ENCODE measurements at regions of chrX and their contacts with region 1.

Region 1: GRCh38 chrX:19017271-19017670 is 33.4 kb upstream of the PHKA2 start:
- DNase-seq: peak; percentile 63
- ATAC-seq: peak; percentile 87
- H3K4me3 ChIP-seq: no peak overlapping the region
- H3K27ac ChIP-seq: no peak overlapping the region
- H3K4me1 ChIP-seq: peaks cover 13% of the 10 kb centered on the region
- H3K27me3 ChIP-seq: no peaks in the 10 kb centered on the region
- CTCF ChIP-seq: peak; percentile 85

Region 2: DNA sequence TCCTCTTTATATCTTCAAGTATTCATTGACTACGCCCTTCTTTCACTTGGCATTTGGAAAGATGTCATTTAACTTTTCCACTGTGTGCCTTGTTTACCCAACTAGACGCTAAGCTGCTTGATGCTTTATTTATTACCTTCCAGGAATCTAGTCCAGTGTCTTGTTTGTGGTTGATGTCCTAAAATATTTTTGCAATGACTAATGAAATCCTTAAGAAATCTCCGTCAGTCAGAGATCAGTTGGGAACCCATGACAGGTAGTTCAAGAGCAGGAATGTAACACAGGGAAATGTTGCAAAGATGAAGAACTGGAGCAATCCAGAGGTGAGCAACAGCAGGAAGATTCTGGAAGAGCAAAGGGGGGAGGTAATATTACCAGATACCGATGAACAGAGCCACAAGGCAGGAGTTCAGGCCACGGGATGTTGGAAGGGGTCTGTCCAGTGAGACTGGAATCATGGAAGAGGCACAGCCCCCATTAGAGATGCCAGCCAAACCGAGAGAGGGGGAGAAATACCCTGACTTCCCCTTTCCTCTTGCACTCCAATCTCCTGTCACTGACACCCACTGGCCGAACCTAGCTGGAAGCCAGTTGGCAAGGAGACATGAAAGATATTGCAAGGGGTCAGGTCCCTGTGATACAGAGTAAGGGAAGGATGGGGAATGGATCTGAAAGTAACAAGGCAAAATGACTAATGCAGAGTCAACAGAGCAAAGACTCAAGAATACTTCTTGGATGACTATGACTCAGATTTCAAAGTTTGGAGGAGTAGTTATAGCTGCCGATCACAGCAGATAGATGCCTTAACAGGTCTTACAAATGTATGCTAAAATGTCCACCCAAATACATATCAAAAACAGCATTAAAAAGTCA is 29.3 kb after region 1 on chrX:
- CTCF ChIA-PET with region 1: no interaction called
- POLR2A ChIA-PET with region 1: no interaction called
- intact Hi-C with region 1: loop called (anchors 2 kb)
- DNase-seq: peak; percentile 89
- ATAC-seq: peak; percentile 93
- H3K4me3 ChIP-seq: peak overlapping the region; percentile 45; the same call in 1 of the 2 replicates
- H3K27ac ChIP-seq: peak overlapping the region; percentile 96
- H3K4me1 ChIP-seq: peaks cover 29% of the 10 kb centered on the region
- H3K27me3 ChIP-seq: no peaks in the 10 kb centered on the region
- CTCF ChIP-seq: no peak

Region 3: DNA sequence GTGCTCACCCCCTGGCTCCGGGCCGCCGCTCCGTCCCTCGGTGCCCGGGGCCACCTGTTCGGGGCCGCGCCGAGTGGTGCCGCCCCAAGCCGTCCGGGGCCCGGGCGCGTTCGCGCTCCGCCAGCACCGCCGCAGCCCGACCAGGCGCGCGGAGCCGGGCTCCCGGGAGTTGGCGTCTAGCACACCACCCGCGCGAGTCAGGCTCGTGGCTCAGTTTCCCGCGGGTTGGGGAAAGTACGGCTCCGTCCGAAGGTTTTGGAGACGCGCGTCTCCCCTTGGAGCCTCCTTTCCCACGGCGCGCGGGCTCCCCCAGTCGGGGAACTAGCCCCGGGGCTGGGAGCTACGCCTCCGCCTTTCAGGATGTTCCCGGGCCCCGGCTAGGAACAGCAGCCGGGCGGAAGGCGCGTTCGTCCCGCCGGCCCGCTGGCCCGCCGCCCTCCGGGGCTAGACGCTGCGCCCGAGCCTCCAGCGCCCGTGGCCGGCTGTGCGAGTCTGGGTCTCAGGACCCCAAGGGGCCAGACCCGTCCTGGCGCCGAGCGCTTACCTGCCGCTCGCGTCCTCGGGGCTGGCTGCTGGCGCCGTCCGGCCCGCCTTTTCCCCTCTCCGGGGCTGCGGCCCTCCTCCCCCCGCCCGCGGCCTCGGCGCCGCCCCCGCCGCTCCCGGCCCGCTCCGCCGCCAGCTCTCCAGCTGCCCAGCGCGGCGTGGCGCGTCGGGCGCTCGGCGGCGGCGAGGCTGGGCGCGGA is 104.8 kb after region 1 on chrX and contains the start of gene ADGRG2:
- CTCF ChIA-PET with region 1: no interaction called
- POLR2A ChIA-PET with region 1: no interaction called
- intact Hi-C with region 1: loop called (anchors 5 kb)
- DNase-seq: peak; percentile 48
- ATAC-seq: peak; percentile 86
- H3K4me3 ChIP-seq: peak within 1 kb of the TSS; percentile 67
- H3K27ac ChIP-seq: no peak within 1 kb of the TSS
- H3K4me1 ChIP-seq: no peaks in the 10 kb centered on the region
- H3K27me3 ChIP-seq: peaks cover 20% of the 10 kb centered on the region
- CTCF ChIP-seq: 0 out of 2 replicates have a peak, but pooled peaks have one; percentile 25
- total RNA-seq, gene ADGRG2: 1.1 and 1.4 TPM in 2 replicates

Region 4: DNA sequence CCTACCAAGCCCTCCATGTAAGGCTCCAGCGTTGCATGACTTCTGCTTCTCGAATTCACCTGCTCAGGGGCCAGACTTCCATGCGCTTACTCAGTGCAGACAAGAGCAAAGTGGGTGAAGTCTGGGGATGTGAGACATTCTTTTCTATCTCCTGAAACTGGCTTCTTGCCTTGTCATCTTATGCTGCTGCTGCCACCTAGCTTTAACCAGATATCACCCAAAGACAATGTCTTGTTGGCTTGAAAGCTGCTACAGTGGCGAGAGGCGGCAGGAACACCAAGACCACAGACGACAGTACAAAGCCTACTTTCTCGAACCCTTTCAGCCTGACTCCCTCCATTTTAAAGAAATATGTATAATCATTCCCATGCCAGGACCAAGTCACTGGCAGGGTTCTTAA is 208.7 kb after region 1 on chrX:
- CTCF ChIA-PET with region 1: no interaction called
- POLR2A ChIA-PET with region 1: no interaction called
- intact Hi-C with region 1: loop called (anchors 1 kb)
- DNase-seq: peak; percentile 61
- ATAC-seq: peak; percentile 55
- H3K4me3 ChIP-seq: no peak overlapping the region
- H3K27ac ChIP-seq: no peak overlapping the region
- H3K4me1 ChIP-seq: peaks cover 4% of the 10 kb centered on the region; the same call in 1 of the 2 replicates
- H3K27me3 ChIP-seq: no peaks in the 10 kb centered on the region
- CTCF ChIP-seq: peak; percentile 56

Measured in PC-3 (cell line).